ENCODE measurements at regions of chr3 and their contacts with region 1.

Region 1: GRCh38 chr3:152471814-152472671 is 203.3 kb downstream of the MBNL1 start:
- DNase-seq: peak; percentile 42 to 62
- H3K4me3 ChIP-seq: no peak overlapping the region
- H3K27ac ChIP-seq: no peak overlapping the region
- H3K4me1 ChIP-seq: no peaks in the 10 kb centered on the region
- H3K27me3 ChIP-seq: no peaks in the 10 kb centered on the region
- CTCF ChIP-seq: peak; percentile 33 to 67 (median 50)
- POLR2A ChIP-seq: no peak

Region 2: GRCh38 chr3:152087153-152087552 is 384.9 kb before region 1 on chr3:
- intact Hi-C with region 1: loop called (anchors 10 kb)
- DNase-seq: no peak
- H3K4me3 ChIP-seq: no peak overlapping the region
- H3K27ac ChIP-seq: no peak overlapping the region
- H3K4me1 ChIP-seq: no peaks in the 10 kb centered on the region
- H3K27me3 ChIP-seq: no peaks in the 10 kb centered on the region
- CTCF ChIP-seq: no peak
- POLR2A ChIP-seq: no peak

Region 3: DNA sequence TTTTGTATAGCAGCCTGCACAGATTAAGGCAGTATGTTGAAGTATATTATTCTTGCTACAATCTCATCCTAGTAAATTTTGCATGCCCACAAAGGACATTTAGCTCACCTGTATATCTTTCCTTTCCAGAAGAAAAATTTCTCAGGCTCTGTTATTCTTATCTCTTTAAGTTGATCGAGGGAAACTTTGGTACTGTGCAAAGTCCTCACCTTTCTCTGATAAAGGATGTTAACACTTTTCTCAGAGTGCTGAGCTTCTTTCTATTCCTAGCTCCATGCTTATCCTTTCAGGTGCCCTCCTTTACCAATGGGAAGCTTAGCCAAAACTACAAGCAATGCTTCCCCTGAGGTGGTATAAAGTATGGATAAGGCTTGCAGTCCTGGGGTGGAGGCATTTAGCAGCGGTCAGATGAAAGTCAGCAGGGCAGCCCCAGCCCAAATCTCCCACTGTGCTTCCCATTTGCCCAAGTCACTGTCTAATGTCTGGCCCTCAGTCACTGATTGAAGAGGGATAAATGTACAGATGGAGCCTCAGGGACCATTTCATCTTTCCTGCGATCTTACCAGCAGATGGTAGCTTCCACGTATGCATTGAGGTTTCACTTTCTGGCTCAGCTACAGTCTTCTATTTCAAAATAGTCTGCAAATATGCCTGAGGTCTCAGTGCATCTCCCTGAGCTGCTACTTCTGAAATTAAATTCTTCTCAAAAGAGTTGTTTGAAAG is 235.1 kb after region 1 on chr3:
- intact Hi-C with region 1: no loop called
- DNase-seq: no peak
- H3K4me3 ChIP-seq: no peak overlapping the region
- H3K27ac ChIP-seq: no peak overlapping the region
- H3K4me1 ChIP-seq: no peaks in the 10 kb centered on the region
- H3K27me3 ChIP-seq: no peaks in the 10 kb centered on the region
- CTCF ChIP-seq: no peak
- POLR2A ChIP-seq: no peak

Region 4: DNA sequence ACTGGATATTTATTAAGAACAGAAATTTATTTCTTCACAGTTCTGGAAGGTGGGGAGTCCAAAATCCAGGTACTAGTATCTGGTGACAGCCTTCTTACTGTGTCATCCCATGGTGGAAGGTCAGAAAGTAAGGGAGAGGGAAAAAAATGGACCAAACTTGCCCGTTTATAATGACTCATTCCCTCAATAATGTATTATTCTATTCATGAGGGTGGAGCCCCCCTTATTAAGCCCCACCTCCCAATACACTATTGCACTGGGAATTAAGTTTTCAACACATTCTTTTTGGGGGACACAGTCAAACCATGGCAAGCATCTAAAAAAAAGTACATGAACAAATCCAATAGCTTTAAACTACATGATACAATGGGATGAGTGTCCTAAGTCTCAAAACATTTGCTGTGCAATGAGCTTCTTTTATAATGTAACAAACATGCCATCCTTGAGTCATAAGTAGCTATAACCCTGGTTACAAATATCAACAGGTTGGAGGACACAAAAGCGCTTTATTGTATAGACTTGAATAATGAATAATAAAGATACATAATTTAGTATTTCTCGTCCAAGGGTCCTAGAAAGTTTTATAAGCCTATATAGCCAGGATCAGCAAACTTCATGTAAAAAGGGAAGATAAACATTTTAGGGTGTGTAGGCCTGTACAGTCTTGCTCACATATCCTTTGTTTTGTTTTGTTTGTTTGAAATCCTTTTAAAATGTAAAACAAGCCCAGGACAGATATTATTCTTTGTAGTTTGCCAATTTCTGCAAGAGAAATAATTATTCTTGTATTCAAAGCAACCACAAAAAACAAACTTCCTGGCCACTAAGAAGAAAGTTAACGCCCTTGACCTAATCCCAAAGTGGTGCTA is 529.4 kb after region 1 on chr3:
- intact Hi-C with region 1: no loop called
- DNase-seq: no peak
- H3K4me3 ChIP-seq: no peak overlapping the region
- H3K27ac ChIP-seq: no peak overlapping the region
- H3K4me1 ChIP-seq: no peaks in the 10 kb centered on the region
- H3K27me3 ChIP-seq: no peaks in the 10 kb centered on the region
- CTCF ChIP-seq: no peak
- POLR2A ChIP-seq: no peak